CD8-positive, alpha-beta T cell (primary cell): ENCODE measurements at regions of chr20 and their contacts with region 1.

Region 1: DNA sequence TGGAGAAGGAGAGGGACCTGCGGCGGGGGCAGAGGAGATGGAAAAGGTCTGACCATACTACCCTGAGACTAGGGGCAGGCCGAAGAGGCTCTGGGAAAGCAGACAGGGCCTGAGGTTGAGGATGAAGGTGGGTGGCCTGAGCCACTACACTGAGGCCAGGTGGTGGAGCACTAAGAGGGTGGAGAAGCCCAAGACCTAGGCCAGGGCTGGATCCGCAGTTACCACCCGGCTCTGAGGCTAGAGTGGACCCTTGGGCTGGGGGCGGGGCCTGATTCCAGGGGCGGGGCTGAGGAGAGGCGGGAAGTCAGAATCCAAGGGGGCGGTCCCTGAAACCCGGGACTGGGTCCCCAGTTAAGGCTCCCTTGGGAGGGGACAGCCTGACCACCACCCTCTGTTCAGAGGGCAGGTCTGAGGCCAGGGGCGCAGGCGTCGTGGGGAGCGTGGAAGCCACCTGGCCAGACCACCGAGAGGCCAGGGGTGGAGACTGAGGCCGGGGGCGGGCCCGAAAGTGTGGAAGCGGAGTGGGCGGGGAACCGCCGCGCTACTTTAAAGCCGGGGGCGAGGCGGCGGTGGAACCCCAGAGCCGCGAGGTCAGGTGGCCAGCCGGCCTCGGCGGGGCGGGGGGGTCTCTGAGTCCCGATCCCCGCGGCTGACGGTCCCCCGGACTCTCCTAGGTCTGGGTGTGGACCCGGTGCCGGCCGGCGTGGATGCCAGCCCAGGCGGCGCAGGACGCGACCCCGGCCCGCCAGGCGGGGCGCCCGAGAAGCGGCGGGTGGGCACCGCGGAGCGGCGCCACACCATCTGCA is 8.2 kb downstream of the CCM2L start:
- DNase-seq: peak; percentile 16 to 54 (median 41)
- ATAC-seq: peak; percentile 51
- H3K4me3 ChIP-seq: peak overlapping the region; percentile 41 to 60
- H3K4me3 Mint-ChIP-seq: peak overlapping the region; percentile 79
- H3K27ac ChIP-seq: no peak overlapping the region
- H3K27ac Mint-ChIP-seq: no peak overlapping the region
- H3K4me1 ChIP-seq: peaks cover 17% of the 10 kb centered on the region
- H3K4me1 Mint-ChIP-seq: peaks cover 21% of the 10 kb centered on the region
- H3K27me3 ChIP-seq: peaks cover 18 to 25% of the 10 kb centered on the region in 2 experiments
- H3K27me3 Mint-ChIP-seq: peaks cover 71% of the 10 kb centered on the region
- CTCF ChIP-seq: no peak

Region 2: GRCh38 chr20:31879143-31879987 is 139.1 kb before region 1 on chr20:
- CTCF ChIA-PET with region 1: no interaction called
- POLR2A ChIA-PET with region 1: no interaction called
- intact Hi-C with region 1: loop called in 1 of 2 experiments (anchors 5 kb)
- DNase-seq: peak; percentile 50 to 90 (median 74)
- ATAC-seq: peak; percentile 84
- H3K4me3 ChIP-seq: peak overlapping the region; percentile 59 to 73
- H3K4me3 Mint-ChIP-seq: peak overlapping the region; percentile 91
- H3K27ac ChIP-seq: no peak overlapping the region
- H3K27ac Mint-ChIP-seq: peak overlapping the region; percentile 63
- H3K4me1 ChIP-seq: no peaks in the 10 kb centered on the region
- H3K4me1 Mint-ChIP-seq: peaks cover 11% of the 10 kb centered on the region
- H3K27me3 ChIP-seq: no peaks in the 10 kb centered on the region
- H3K27me3 Mint-ChIP-seq: peaks cover 3% of the 10 kb centered on the region
- CTCF ChIP-seq: no peak

Region 3: GRCh38 chr20:31968291-31969126 is 50.0 kb before region 1 on chr20:
- CTCF ChIA-PET with region 1: no interaction called
- POLR2A ChIA-PET with region 1: no interaction called
- intact Hi-C with region 1: loop called in 1 of 2 experiments (anchors 2 kb)
- DNase-seq: peak; percentile 70 to 89 (median 82)
- ATAC-seq: peak; percentile 99
- H3K4me3 ChIP-seq: peak overlapping the region in 1 of 2 experiments; percentile 20
- H3K4me3 Mint-ChIP-seq: peak overlapping the region; percentile 85
- H3K27ac ChIP-seq: no peak overlapping the region
- H3K27ac Mint-ChIP-seq: no peak overlapping the region
- H3K4me1 ChIP-seq: no peaks in the 10 kb centered on the region
- H3K4me1 Mint-ChIP-seq: peaks cover 6% of the 10 kb centered on the region
- H3K27me3 ChIP-seq: peaks cover 11 to 21% of the 10 kb centered on the region in 2 experiments
- H3K27me3 Mint-ChIP-seq: peaks cover 56% of the 10 kb centered on the region
- CTCF ChIP-seq: no peak

Region 4: DNA sequence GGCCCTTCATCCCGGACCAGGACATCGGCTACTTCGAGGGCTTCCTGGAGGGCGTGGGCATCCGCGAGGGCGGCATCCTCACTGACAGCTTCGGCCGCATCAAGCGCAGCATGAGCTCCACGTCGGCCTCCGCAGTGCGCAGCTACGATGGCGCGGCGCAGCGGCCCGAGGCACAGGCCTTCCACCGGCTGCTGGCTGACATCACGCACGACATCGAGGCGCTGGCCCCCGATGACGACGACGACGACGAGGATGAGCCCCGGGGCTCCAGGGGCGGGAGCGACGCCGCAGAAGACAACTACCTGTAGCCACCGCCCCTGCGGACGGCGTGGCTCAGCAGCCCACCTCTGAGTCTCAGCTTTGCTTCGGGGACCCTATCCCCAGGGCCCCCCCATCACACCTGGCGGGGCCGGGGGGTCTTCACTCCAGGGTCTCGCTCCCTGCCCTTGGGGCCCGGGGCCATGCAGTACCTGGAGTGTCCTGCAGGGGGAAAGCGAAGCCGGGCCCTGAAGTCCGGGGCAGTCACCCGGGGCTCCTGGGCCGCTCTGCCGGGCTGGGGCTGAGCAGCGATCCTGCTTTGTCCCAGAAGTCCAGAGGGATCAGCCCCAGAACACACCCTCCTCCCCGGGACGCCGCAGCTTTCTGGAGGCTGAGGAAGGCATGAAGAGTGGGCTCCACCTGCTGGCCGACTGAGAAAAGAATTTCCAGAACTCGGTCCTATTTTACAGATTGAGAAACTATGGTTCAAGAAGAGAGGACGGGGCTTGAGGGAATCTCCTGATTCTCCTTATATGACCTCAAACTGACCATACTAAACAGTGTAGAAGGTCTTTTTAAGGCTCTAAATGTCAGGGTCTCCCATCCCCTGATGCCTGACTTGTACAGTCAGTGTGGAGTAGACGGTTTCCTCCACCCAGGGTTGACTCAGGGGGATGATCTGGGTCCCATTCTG is 12.8 kb after region 1 on chr20:
- CTCF ChIA-PET with region 1: interaction called, 10 read pairs
- POLR2A ChIA-PET with region 1: no interaction called
- intact Hi-C with region 1: no loop called
- DNase-seq: peak; percentile 22 to 73 (median 59)
- ATAC-seq: peak; percentile 75
- H3K4me3 ChIP-seq: peak overlapping the region; percentile 28 to 32
- H3K4me3 Mint-ChIP-seq: peak overlapping the region; percentile 39
- H3K27ac ChIP-seq: no peak overlapping the region
- H3K27ac Mint-ChIP-seq: no peak overlapping the region
- H3K4me1 ChIP-seq: peaks cover 4% of the 10 kb centered on the region
- H3K4me1 Mint-ChIP-seq: peaks cover 2% of the 10 kb centered on the region
- H3K27me3 ChIP-seq: peaks cover 4 to 7% of the 10 kb centered on the region in 2 experiments
- H3K27me3 Mint-ChIP-seq: peaks cover 31% of the 10 kb centered on the region
- CTCF ChIP-seq: peak; percentile 100